ENCODE measurements at regions of chr18 and their contacts with region 1.

Region 1: DNA sequence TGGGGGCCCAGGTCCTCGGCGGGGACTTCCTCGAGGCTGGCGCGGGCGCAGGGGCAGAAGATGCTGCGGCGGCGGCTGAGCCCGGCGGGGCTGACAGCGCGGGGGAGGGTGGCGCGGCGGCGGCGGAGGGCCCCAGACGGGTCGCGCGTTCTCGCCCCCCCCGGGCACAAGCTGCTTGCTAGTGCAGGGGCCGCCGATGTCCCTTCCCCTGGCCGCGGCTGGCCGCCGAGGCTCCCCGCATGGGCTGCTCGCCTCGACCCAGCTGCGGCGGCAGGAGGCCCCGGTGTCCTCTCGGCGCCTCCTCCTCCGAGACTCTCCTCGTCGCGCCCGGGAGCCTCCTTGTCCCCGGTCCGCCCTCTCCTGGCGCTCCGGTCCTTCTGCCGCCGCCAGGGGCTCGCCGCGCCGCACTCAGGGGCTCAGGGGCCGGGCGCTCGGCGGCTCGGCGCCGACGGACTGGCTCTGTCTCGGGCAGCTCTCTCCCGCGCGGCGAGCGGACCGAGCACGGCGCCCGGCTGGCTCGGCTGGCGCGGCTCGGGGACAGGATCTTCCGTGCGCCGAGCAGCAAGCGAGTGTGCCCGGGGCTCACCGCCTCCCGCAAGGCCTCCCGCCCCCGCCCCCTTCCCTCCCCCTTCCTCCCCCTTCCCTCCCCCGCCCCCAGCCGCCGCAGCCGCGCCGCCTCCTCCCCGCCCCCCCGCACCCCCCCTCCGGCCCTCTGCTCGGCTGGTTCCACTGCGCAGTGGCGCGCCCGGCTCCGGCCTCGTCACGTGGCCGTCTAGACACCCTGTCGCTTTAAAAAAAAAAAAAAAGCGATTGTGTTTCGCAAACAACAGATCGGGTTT is 902 bp upstream of the SMAD7 start:
- DNase-seq: no peak
- H3K4me3 ChIP-seq: peak overlapping the region; percentile 83 to 97 (median 95)
- H3K27ac ChIP-seq: peak overlapping the region; percentile 90 to 99 (median 98)
- H3K4me1 ChIP-seq: peaks cover 29 to 54% (median 48%) of the 10 kb centered on the region in 4 donors
- H3K27me3 ChIP-seq: no peaks in the 10 kb centered on the region
- CTCF ChIP-seq: peak; percentile 26 to 41 (median 32)
- EP300 ChIP-seq: no peak
- POLR2A ChIP-seq: peak; percentile 45

Region 2: DNA sequence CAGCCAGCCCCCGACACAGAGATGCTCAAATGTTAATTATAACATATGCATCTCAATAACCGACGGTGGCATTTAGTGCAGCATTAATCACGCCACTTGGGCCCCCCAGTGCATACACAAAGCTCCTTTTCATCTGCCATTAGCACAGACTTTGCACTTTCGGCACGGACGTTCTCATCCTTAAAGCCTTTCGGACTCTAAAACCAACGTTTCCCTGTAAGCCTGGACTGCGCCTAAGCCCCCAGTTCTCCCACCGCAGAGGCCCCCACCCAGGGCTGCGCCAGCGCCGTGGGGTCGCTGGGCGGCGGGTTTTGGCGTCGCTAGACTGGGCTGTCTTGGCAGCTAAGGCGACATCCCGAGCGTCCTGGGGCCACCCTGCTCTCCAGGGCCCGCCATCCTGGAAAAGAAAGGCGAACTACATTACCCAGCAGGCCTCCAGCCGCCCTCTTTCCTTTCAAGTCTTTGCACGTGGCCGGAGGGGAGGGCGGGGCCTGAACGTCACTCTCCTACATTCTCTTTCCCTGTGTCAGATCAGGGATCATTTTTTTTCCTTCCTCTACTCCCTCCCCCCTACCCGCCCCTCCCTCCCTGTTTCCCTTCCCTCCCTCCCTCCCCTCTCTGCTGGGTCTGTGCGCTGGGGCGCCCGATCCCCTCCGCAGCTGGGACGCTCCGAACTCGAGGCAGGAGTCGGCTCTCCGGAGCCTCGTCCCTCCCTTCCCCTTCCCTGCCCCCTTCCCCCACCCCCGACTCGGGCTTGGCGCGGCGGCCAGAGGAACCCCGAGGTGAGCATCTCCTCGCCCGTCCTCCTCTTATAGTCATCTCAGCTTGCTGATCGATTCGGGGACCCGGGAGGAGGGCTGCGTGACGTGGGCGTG is 412.9 kb before region 1 on chr18 and contains the start of gene CTIF:
- intact Hi-C with region 1: loop called (anchors 10 kb)
- DNase-seq: peak; percentile 100
- H3K4me3 ChIP-seq: peak within 1 kb of the TSS; percentile 67 to 87 (median 77)
- H3K27ac ChIP-seq: peak within 1 kb of the TSS; percentile 94 to 98 (median 96)
- H3K4me1 ChIP-seq: peaks cover 31 to 42% (median 31%) of the 10 kb centered on the region in 4 donors
- H3K27me3 ChIP-seq: no peaks in the 10 kb centered on the region
- CTCF ChIP-seq: no peak
- EP300 ChIP-seq: no peak
- POLR2A ChIP-seq: no peak
- total RNA-seq, gene CTIF: 63.1 to 137 (median 87.7) TPM

Region 3: GRCh38 chr18:48675352-48675761 is 276.3 kb before region 1 on chr18:
- intact Hi-C with region 1: loop called (anchors 10 kb)
- DNase-seq: peak; percentile 95
- H3K4me3 ChIP-seq: no peak overlapping the region
- H3K27ac ChIP-seq: peak overlapping the region in 1 of 4 donors; percentile 21
- H3K4me1 ChIP-seq: peaks cover 43 to 65% (median 47%) of the 10 kb centered on the region in 4 donors
- H3K27me3 ChIP-seq: no peaks in the 10 kb centered on the region
- CTCF ChIP-seq: peak; percentile 87 to 97 (median 91)
- EP300 ChIP-seq: no peak
- POLR2A ChIP-seq: no peak

Region 4: GRCh38 chr18:48781163-48781987 is 170.3 kb before region 1 on chr18:
- intact Hi-C with region 1: loop called (anchors 5 kb)
- DNase-seq: peak; percentile 93
- H3K4me3 ChIP-seq: peak overlapping the region; percentile 24 to 32 (median 28)
- H3K27ac ChIP-seq: peak overlapping the region; percentile 78 to 82 (median 80)
- H3K4me1 ChIP-seq: peaks cover 60 to 79% (median 73%) of the 10 kb centered on the region in 4 donors
- H3K27me3 ChIP-seq: no peaks in the 10 kb centered on the region
- CTCF ChIP-seq: no peak
- EP300 ChIP-seq: no peak
- POLR2A ChIP-seq: no peak

Region 5: GRCh38 chr18:48827291-48828193 is 124.1 kb before region 1 on chr18:
- intact Hi-C with region 1: no loop called
- DNase-seq: no peak
- H3K4me3 ChIP-seq: peak overlapping the region; percentile 2 to 19 (median 16)
- H3K27ac ChIP-seq: peak overlapping the region; percentile 38 to 70 (median 50)
- H3K4me1 ChIP-seq: peaks cover 47 to 63% (median 55%) of the 10 kb centered on the region in 4 donors
- H3K27me3 ChIP-seq: no peaks in the 10 kb centered on the region
- CTCF ChIP-seq: no peak
- EP300 ChIP-seq: no peak
- POLR2A ChIP-seq: no peak

Region 6: DNA sequence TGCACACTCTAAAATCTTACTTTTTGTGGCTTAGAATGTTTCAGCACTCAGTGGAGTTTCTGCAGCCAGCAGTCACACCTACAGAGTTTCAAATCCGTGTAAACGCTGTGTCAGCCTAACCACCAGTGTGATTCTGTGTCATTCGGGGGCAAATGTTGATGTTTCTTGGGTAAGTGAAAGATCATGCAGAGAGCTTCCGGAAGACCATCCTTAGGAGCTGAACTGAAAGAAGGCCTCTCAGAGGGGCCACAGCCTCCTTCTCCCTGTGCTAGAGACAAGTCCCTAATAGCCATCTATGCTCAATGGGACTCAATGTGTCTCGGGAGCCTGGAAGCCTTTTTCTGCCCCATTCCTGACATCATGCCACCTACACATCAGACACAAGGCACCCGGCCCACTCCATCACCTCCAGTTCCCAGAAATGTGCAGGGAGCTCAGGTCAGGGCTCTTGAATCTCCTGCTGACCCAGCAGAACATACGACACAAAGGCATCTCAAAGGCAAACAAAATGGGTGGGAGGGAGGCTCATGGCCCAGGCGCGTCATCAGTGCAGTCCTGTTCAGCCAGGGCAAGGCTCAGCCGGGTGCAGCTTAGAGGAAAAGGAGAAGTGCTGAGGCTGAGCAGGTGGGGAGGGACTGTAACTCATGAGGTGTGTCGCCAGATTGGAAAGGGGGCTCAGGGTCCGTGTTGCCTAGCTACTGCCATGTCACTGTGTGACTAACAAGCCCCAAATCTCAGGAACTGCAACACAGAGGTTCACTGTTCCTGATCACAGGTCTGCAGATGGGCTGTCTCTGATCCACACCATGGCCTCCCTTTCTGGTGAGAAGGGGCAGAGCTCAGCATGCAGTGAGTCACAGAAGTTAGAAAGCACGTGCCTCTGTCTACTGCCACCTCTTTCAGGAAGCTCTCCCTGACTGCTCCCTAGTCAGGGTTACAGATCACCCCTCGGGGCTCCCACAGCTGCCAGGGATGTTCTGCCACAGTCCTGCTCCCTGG is 82.9 kb before region 1 on chr18:
- intact Hi-C with region 1: no loop called
- DNase-seq: no peak
- H3K4me3 ChIP-seq: no peak overlapping the region
- H3K27ac ChIP-seq: no peak overlapping the region
- H3K4me1 ChIP-seq: peaks cover 8 to 16% (median 12%) of the 10 kb centered on the region in 4 donors
- H3K27me3 ChIP-seq: no peaks in the 10 kb centered on the region
- CTCF ChIP-seq: no peak
- EP300 ChIP-seq: no peak
- POLR2A ChIP-seq: no peak

Region 7: DNA sequence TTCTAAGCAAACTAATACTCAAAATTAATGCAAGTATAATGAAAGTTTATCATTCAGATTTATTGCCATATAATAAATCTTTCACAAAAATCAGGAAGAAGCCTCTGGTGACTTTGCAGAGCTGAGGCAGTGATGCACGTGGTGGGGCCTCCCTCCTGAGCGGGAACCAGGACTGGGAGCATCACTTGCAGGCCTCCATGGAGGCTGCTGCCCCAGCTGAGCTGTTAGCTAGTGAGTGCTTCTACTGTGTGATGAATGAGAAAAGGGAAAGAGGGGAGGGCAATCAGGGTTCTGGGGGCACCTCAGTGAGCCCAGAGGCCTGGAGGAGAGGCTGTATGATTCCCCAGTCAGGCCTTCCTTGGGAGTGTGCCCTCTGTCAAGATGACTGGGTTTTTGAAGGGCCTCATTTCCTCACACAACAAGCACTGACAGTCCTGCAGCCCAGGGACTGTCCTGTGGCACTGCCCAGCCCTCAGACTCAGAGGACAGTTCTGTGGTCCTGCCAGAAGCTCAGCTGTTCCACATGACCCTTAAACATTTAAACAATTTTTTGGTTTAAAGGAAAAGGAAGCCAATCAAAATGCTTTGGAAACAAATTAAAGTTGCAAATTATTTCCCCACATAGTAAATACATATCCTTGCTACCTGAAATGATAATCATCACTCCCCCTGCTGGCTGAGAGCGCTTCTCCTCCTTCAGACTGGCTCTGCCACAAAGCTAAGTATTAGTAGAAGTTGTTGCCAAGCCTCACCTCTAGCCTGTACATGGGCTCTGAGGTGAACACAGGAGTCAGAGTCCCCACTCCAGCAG is 90.0 kb after region 1 on chr18:
- intact Hi-C with region 1: loop called (anchors 5 kb)
- DNase-seq: no peak
- H3K4me3 ChIP-seq: no peak overlapping the region
- H3K27ac ChIP-seq: peak overlapping the region in 3 of 4 donors; percentile 29 to 45 (median 43)
- H3K4me1 ChIP-seq: peaks cover 0 to 10% (median 7%) of the 10 kb centered on the region in 4 donors
- H3K27me3 ChIP-seq: no peaks in the 10 kb centered on the region
- CTCF ChIP-seq: peak; percentile 58 to 80 (median 65)
- EP300 ChIP-seq: no peak
- POLR2A ChIP-seq: no peak

Region 8: DNA sequence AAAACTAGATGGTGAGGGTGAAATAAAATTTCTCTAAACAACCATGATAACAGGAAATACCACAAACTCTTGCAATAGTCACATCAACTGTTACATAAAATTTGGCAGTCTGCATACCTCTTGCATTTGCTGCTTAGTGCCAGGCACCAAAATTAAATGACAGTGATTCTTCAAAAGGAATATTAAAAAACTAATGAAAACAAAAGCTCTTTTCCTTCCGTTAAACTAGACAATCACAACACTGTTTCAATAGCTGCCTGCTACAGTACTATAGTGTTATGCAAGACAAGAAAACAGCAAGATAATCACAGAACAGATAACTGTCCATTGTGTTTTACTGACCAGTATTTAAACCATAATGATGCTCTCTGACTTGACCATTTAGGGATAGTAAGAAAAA is 238.1 kb after region 1 on chr18:
- intact Hi-C with region 1: loop called (anchors 10 kb)
- DNase-seq: no peak
- H3K4me3 ChIP-seq: no peak overlapping the region
- H3K27ac ChIP-seq: no peak overlapping the region
- H3K4me1 ChIP-seq: peaks cover 0 to 23% (median 16%) of the 10 kb centered on the region in 4 donors
- H3K27me3 ChIP-seq: no peaks in the 10 kb centered on the region
- CTCF ChIP-seq: no peak
- EP300 ChIP-seq: no peak
- POLR2A ChIP-seq: no peak

Region 9: DNA sequence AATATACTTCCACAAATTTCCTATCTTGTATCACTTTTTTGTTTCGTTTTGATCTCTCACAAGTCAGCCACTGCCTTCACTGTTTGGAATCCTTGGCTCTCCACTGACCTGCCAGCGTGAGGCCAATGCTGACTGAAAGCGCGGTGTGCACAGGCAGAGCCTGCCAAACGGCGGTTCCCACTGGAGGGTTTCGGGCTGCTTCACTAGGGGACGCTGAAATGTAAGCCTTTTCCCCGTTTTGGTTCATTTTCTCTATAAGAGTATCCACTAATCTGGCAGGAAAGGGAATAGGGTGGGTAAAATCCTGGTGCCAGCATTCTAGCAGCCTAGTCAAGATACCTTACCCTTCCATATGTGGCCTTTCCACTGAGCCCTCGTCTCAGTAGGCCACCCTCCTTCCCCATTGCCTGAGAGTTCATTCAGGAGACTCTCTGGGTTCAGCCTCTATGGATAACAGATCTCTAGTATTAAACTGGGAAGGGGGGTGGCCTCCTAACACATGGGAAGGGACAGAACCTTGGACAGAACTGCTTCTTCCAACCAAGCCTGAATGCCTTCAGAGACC is 417.3 kb after region 1 on chr18:
- intact Hi-C with region 1: no loop called
- DNase-seq: no peak
- H3K4me3 ChIP-seq: peak overlapping the region; percentile 18 to 34 (median 30)
- H3K27ac ChIP-seq: peak overlapping the region; percentile 42 to 67 (median 57)
- H3K4me1 ChIP-seq: peaks cover 0 to 45% (median 36%) of the 10 kb centered on the region in 4 donors
- H3K27me3 ChIP-seq: no peaks in the 10 kb centered on the region
- CTCF ChIP-seq: no peak
- EP300 ChIP-seq: no peak
- POLR2A ChIP-seq: no peak